ENCODE measurements at regions of chr9 and their contacts with region 1.

Region 1: GRCh38 chr9:88829276-88829675 is 162.0 kb upstream of the S1PR3 start:
- DNase-seq: no peak
- H3K4me3 ChIP-seq: no peak overlapping the region
- H3K27ac ChIP-seq: no peak overlapping the region
- H3K4me1 ChIP-seq: peaks cover 1% of the 10 kb centered on the region
- H3K27me3 ChIP-seq: no peaks in the 10 kb centered on the region
- CTCF ChIP-seq: no peak
- EP300 ChIP-seq: no peak
- POLR2A ChIP-seq: no peak

Region 2: DNA sequence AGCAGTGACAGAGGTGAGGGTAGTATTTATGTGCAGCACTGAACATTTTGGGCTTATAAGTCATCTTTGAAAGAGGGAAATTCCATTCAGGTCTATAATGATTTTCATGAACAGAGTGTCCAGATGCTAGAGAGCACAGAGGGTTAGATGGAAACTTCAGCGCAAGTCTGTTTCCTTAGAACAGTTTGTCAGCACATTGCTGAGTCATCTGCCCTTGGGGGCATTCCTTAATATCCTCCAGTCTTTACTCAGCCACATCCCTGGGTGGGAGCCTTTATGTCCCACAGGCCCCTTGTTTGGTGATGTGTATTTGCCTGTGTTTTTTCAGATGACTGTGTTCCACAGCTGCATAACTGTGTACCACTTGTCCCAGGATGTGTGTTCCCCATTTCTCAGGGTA is 23.5 kb after region 1 on chr9:
- intact Hi-C with region 1: loop called in 1 of 4 experiments (anchors 2 kb)
- DNase-seq: no peak
- H3K4me3 ChIP-seq: no peak overlapping the region
- H3K27ac ChIP-seq: no peak overlapping the region
- H3K4me1 ChIP-seq: no peaks in the 10 kb centered on the region
- H3K27me3 ChIP-seq: no peaks in the 10 kb centered on the region
- CTCF ChIP-seq: no peak
- EP300 ChIP-seq: no peak
- POLR2A ChIP-seq: no peak

Measured in ovary (tissue), 10 donors.